ENCODE measurements at regions of chr6 and their contacts with region 1.

Region 1: GRCh38 chr6:146850238-146850896 is 251.6 kb downstream of the ADGB start:
- DNase-seq: peak; percentile 83
- H3K4me3 Mint-ChIP-seq: no peak overlapping the region
- H3K27ac Mint-ChIP-seq: peak overlapping the region; percentile 86
- H3K4me1 Mint-ChIP-seq: peaks cover 32% of the 10 kb centered on the region
- H3K27me3 Mint-ChIP-seq: peaks cover 7% of the 10 kb centered on the region

Region 2: GRCh38 chr6:146785001-146785585 is 65.3 kb before region 1 on chr6:
- CTCF ChIA-PET with region 1: no interaction called
- POLR2A ChIA-PET with region 1: no interaction called
- intact Hi-C with region 1: loop called (anchors 2 kb)
- DNase-seq: peak; percentile 13
- H3K4me3 Mint-ChIP-seq: no peak overlapping the region
- H3K27ac Mint-ChIP-seq: no peak overlapping the region
- H3K4me1 Mint-ChIP-seq: peaks cover 9% of the 10 kb centered on the region
- H3K27me3 Mint-ChIP-seq: peaks cover 1% of the 10 kb centered on the region

Region 3: DNA sequence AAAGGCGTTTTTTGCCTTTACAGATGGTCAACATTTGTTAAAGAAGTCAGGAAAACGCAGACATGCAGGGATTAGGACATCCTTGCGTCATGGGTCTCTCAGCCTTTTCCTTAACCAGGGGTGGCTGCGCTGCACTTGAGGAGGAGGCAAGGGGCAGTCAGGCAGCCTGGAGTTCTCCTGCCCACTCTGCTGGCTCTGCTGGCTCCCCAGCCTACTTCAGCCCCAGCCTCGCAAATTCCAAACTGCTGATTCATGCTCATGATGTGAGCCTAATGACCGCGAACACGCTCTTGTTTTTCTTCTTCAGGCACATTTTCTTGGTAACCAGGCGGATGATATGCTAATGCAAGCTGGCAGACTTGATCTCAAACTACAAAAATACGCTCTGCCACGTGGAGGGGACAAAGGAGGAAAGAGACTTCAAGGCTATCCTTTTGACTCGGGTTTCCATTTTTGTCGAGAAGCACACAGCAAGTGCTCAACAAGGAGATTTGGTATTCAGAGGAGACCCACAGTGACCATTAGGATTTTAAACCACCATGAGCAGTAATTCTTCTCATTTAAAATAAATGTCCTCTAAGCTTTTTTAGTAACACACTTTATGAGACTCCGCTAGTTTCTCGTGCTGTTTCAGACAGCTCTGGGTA is 63.6 kb after region 1 on chr6:
- CTCF ChIA-PET with region 1: no interaction called
- POLR2A ChIA-PET with region 1: no interaction called
- intact Hi-C with region 1: no loop called
- DNase-seq: peak; percentile 43
- H3K4me3 Mint-ChIP-seq: no peak overlapping the region
- H3K27ac Mint-ChIP-seq: no peak overlapping the region
- H3K4me1 Mint-ChIP-seq: peaks cover 11% of the 10 kb centered on the region
- H3K27me3 Mint-ChIP-seq: peaks cover 7% of the 10 kb centered on the region

Region 4: DNA sequence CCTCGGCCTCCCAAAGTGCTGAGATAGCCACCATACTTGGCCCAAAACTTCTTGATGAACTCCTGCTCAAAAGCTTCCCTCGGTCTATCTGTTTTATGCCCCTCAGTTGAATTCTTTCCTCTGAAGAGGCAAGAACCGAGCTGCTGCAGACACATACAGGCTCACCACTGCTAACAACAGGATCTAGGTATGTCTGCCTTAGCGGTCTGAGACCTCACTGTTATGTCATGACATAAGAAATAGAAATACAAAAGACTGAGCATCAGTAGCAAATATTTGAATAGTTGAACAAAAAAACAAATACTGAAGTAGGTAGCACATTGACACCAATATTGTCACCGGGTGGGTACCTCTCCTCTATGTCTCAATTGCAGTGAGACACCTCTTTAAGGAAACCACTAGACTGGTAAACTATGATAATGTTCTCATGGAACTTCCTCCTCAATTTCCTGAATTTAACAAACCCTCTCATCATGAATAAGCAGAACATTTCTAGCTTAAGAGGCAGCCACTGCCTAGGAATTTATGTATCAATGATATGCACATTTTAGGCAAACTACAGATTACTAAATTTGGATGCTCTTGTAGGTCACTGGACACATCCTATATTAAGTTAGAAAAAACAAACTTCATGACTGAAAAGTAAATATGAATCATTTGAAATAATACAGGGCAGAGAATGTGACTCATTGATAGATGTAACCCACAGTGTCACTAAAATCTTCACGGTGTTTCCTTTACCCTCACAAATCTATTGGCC is 344.5 kb after region 1 on chr6:
- CTCF ChIA-PET with region 1: no interaction called
- POLR2A ChIA-PET with region 1: no interaction called
- intact Hi-C with region 1: loop called (anchors 1 kb)
- DNase-seq: no peak
- H3K4me3 Mint-ChIP-seq: peak overlapping the region; percentile 21
- H3K27ac Mint-ChIP-seq: peak overlapping the region; percentile 87
- H3K4me1 Mint-ChIP-seq: peaks cover 21% of the 10 kb centered on the region
- H3K27me3 Mint-ChIP-seq: no peaks in the 10 kb centered on the region

Region 5: DNA sequence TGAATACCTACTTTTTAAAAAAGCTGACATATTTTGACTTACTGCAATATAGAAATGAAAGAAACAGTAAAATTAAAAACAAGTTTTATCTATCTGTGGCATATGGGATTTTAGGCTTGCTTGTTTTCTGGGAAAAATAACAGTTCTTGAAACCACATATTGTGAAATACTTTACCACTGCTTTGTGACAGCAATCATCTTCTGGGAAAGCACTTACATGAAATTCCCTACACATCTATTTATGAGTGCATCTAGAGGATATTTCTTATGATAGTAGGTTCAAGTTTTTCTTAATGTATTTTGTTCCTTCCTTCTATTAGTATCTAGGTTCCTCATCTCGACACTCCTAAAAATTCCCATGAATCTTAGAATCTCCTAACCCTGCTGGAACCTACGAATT is 429.1 kb after region 1 on chr6:
- CTCF ChIA-PET with region 1: interaction called, 3 read pairs
- POLR2A ChIA-PET with region 1: interaction called, 4 read pairs
- intact Hi-C with region 1: loop called (anchors 1 kb)
- DNase-seq: no peak
- H3K4me3 Mint-ChIP-seq: no peak overlapping the region
- H3K27ac Mint-ChIP-seq: peak overlapping the region; percentile 83
- H3K4me1 Mint-ChIP-seq: peaks cover 41% of the 10 kb centered on the region
- H3K27me3 Mint-ChIP-seq: no peaks in the 10 kb centered on the region

Region 6: DNA sequence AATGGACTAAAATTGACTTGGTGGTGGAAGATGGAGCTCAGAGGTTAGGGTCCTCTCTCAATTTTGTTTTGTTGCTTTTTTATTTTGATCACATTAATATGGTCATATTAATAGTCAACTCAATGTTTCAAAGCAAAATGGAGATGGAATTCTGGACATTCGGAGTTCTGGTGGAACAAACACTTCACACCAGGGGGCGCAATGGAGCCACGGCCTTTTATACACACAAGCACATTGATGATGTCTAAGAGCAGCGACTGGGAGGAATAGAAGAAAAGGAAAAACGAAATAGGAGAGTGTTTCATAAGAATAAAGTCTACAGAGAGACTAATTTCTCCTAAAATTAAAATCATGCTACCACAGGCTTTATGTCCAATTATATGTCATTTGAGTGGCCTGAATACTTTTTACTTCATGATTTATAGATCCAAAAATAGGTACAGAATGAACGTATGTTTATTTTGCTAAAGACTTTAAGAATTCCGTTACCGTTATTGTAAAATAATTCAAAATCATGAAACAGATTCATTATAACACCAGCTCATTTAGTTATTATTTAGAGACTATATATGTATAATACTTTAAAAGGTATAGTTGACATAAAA is 1294.7 kb after region 1 on chr6:
- CTCF ChIA-PET with region 1: no interaction called
- POLR2A ChIA-PET with region 1: no interaction called
- intact Hi-C with region 1: loop called (anchors 5 kb)
- DNase-seq: peak; percentile 78
- H3K4me3 Mint-ChIP-seq: no peak overlapping the region
- H3K27ac Mint-ChIP-seq: no peak overlapping the region
- H3K4me1 Mint-ChIP-seq: peaks cover 15% of the 10 kb centered on the region
- H3K27me3 Mint-ChIP-seq: peaks cover 5% of the 10 kb centered on the region